ENCODE measurements at regions of chr18 and their contacts with region 1.

Region 1: DNA sequence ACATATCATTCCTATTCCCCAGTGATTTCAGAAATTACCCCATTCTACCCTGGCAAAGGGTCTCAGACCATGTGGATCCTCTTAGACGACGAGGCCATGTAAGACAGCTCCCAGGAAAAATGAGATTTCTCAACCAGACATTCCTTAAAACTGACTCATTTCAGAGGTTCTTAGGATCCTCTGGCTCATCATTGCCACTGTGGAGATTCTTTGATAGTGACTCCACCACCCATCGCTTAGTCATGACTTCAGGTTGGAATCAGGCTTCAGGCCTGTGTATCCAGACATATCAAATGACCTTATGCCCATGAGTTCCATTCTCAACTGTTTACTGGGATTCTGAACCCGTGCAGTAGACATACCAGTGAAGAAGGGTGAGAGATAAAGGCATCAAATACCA is 245.6 kb upstream of the TCF4 start:
- DNase-seq: peak; percentile 95
- H3K4me3 Mint-ChIP-seq: no peak overlapping the region
- H3K27ac Mint-ChIP-seq: peak overlapping the region; percentile 86
- H3K4me1 Mint-ChIP-seq: peaks cover 28% of the 10 kb centered on the region
- H3K27me3 Mint-ChIP-seq: no peaks in the 10 kb centered on the region
- CTCF ChIP-seq: no peak

Region 2: DNA sequence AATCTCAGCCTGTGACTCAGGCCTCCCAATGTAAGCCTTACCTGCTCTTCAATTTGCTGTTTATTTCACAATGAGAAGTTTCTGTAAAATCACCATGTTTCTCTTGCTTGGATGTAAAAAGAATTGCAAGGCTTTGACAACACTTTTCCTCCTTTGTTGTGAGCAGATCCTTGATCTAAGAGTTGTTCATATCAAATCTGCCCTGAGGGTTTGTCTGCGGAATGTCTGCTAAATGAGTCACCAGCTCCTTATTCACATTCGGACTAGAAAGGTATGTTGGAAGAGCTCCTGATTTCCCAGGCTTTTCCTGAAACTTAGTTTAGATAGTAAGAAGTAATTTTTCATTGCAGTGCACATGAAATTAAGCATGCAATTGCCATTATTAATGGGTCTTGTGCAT is 22.7 kb after region 1 on chr18:
- CTCF ChIA-PET with region 1: no interaction called
- POLR2A ChIA-PET with region 1: interaction called, 22 read pairs
- intact Hi-C with region 1: no loop called
- DNase-seq: peak; percentile 97
- H3K4me3 Mint-ChIP-seq: no peak overlapping the region
- H3K27ac Mint-ChIP-seq: peak overlapping the region; percentile 64
- H3K4me1 Mint-ChIP-seq: peaks cover 35% of the 10 kb centered on the region
- H3K27me3 Mint-ChIP-seq: no peaks in the 10 kb centered on the region
- CTCF ChIP-seq: no peak

Region 3: GRCh38 chr18:55968550-55968949 is 135.0 kb after region 1 on chr18:
- CTCF ChIA-PET with region 1: no interaction called
- POLR2A ChIA-PET with region 1: no interaction called
- intact Hi-C with region 1: no loop called
- DNase-seq: peak; percentile 23
- H3K4me3 Mint-ChIP-seq: no peak overlapping the region
- H3K27ac Mint-ChIP-seq: no peak overlapping the region
- H3K4me1 Mint-ChIP-seq: no peaks in the 10 kb centered on the region
- H3K27me3 Mint-ChIP-seq: no peaks in the 10 kb centered on the region
- CTCF ChIP-seq: no peak

Region 4: GRCh38 chr18:56127322-56128099 is 294.0 kb after region 1 on chr18:
- CTCF ChIA-PET with region 1: no interaction called
- POLR2A ChIA-PET with region 1: no interaction called
- intact Hi-C with region 1: no loop called
- DNase-seq: no peak
- H3K4me3 Mint-ChIP-seq: no peak overlapping the region
- H3K27ac Mint-ChIP-seq: no peak overlapping the region
- H3K4me1 Mint-ChIP-seq: peaks cover 10% of the 10 kb centered on the region
- H3K27me3 Mint-ChIP-seq: no peaks in the 10 kb centered on the region
- CTCF ChIP-seq: no peak